AG04450 (cell line): ENCODE measurements at regions of chr4 and their contacts with region 1.

Region 1: DNA sequence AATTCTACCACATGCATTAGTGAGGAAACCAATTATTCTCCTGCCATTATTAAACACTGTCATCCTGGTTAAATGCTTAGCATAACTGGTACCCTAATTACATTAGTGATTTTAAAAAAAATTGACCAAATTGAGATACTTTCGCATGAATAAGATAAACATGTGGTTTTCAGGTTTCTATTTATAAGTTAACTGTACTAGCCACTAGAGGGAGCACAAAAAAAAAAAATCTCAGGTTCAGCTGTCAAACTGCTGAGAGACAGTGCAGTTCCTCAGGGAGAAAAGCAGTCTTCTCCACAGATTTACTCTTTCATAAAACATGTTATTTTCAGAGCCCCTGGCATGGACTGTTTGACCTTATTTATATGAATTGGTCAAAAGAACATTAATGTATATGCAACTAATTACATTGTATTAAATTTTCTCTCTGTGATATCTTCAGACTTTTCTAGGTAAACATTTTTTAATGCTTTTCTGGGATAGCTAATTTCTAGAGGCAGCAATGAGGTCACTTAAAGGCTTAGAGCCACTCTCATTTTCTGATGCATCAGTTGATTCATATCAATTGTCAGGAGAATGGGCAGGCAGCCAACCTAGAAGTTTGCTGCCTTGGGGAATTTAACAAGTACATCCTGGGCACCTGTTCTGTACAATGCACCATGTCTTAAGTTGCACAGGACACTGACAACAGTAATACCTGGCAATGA is 167.5 kb downstream of the CDS1 start:
- DNase-seq: peak; percentile 7
- H3K4me3 ChIP-seq: no peak overlapping the region
- H3K27ac ChIP-seq: no peak overlapping the region
- H3K27me3 ChIP-seq: no peaks in the 10 kb centered on the region
- CTCF ChIP-seq: peak; percentile 64

Region 2: DNA sequence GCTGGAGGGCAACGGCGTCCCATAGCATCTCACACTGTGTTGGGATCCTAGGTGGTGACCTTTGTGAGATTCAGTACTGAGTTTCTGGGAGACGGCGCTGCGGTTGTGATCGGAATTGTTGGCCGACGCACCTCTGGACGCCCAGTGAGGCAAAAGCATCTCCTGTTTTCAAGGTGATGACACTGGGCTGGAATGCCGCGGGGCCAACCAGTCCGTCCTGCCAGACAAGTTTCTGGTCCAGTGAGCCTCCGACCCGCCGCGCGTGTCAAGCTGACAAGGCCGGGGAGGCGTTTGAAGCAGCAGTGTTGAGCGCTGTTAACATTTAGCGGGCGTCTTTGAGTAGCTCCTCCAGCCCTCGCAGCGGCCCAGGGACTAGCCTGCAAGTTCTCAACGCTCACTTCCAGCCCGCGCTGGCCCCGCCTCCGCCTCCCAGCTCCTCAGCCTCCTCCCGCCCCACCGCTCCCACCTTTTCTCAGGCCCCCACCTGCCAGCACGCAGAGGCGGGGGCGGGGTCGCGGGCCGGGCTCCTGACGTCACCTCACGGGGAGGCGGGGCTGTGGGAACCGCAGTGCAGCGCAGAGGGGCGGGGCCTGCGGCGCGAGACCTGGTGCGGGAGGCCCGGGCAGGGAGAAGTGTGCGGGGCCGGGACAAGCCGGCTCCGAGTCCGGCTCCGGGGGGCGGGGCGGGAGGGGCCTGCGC is 168.0 kb before region 1 on chr4:
- CTCF ChIA-PET with region 1: interaction called, 14 read pairs
- POLR2A ChIA-PET with region 1: no interaction called
- DNase-seq: no peak
- H3K4me3 ChIP-seq: peak overlapping the region; percentile 58
- H3K27ac ChIP-seq: no peak overlapping the region
- H3K27me3 ChIP-seq: peaks cover 38% of the 10 kb centered on the region
- CTCF ChIP-seq: no peak

Region 3: GRCh38 chr4:84733343-84734033 is 16.9 kb before region 1 on chr4:
- CTCF ChIA-PET with region 1: interaction called, 28 read pairs
- POLR2A ChIA-PET with region 1: no interaction called
- DNase-seq: no peak
- H3K4me3 ChIP-seq: no peak overlapping the region
- H3K27ac ChIP-seq: no peak overlapping the region
- H3K27me3 ChIP-seq: no peaks in the 10 kb centered on the region
- CTCF ChIP-seq: no peak

Region 4: GRCh38 chr4:84740057-84740456 is 10.3 kb before region 1 on chr4:
- CTCF ChIA-PET with region 1: interaction called, 28 read pairs
- POLR2A ChIA-PET with region 1: no interaction called
- DNase-seq: no peak
- H3K4me3 ChIP-seq: no peak overlapping the region
- H3K27ac ChIP-seq: no peak overlapping the region
- H3K27me3 ChIP-seq: no peaks in the 10 kb centered on the region
- CTCF ChIP-seq: no peak

Region 5: DNA sequence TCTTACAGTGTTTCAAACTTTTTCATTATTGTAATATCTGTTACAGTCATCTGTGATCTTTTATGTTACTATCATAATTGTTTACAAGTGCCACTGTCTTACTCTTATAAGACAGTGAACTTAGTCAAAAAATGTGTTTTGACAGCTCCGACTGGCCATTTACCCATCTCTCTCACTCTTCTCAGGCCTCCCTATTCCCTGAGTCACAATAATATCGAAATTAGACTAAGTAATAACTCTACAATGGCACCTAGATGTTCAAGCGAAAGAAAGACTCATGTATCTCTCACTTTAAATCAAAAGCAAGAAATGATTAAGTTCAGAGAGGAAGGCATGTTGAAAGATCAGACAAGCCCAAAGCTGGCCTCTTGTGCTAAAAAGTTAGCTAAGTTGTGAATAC is 16.8 kb after region 1 on chr4:
- CTCF ChIA-PET with region 1: interaction called, 28 read pairs
- POLR2A ChIA-PET with region 1: no interaction called
- DNase-seq: no peak
- H3K4me3 ChIP-seq: no peak overlapping the region
- H3K27ac ChIP-seq: no peak overlapping the region
- H3K27me3 ChIP-seq: no peaks in the 10 kb centered on the region
- CTCF ChIP-seq: no peak

Region 6: DNA sequence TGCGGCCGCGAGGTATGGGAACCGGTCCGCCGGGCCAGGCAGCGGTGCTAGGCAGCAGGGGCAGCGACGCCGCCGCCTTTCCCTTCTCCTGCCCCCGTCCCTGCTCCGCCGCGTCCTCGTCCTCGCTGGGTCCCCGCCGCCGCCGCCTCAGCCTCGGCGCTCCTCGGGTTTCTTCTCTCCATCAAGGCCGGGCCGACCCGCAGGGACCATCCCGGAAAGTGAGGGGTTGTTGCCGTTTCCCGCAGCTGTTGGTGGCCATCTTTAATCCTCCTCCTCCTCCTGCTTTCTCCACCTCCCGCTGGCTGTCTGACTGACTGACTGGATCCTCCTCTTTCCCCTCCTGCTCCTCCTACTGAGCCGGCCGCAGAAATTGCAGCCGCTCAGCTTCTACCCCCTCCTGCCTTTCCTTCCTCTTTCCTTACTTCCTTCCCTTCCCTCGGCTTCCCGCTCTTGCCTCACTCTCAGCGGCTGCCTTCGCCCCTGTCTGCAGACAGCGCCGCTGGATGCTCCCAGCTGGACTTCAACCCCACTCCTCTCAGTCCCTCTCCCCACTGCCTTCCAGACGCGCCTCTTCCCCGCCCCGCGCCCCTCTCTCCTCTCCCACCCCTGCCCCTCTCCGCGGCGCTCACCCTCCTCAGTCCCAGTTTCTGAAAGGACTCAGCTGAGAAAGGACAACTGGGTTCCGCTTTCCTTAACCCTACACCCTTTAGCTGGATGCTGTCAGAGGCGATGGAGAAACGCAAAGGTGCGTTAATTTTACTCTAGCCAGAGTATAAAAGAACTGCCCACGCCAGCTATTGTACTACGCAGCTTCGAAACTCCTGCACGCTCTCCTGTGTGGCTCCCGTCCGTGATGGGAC is 216.2 kb after region 1 on chr4 and contains the start of gene WDFY3:
- CTCF ChIA-PET with region 1: interaction called, 152 read pairs
- POLR2A ChIA-PET with region 1: interaction called, 5 read pairs
- DNase-seq: peak; percentile 74
- H3K4me3 ChIP-seq: peak within 1 kb of the TSS; percentile 78
- H3K27ac ChIP-seq: peak within 1 kb of the TSS; percentile 81
- H3K27me3 ChIP-seq: no peaks in the 10 kb centered on the region
- CTCF ChIP-seq: peak; percentile 23; the same call in 1 of the 2 replicates
- polyA plus RNA-seq, gene WDFY3: 30.6 and 31.5 TPM in 2 replicates

Region 7: GRCh38 chr4:85058551-85058950 is 308.1 kb after region 1 on chr4:
- CTCF ChIA-PET with region 1: no interaction called
- POLR2A ChIA-PET with region 1: no interaction called
- DNase-seq: no peak
- H3K4me3 ChIP-seq: no peak overlapping the region
- H3K27ac ChIP-seq: no peak overlapping the region
- H3K27me3 ChIP-seq: no peaks in the 10 kb centered on the region
- CTCF ChIP-seq: no peak